GM23248 (cell line): ENCODE measurements at regions of chr7 and their contacts with region 1.

Region 1: DNA sequence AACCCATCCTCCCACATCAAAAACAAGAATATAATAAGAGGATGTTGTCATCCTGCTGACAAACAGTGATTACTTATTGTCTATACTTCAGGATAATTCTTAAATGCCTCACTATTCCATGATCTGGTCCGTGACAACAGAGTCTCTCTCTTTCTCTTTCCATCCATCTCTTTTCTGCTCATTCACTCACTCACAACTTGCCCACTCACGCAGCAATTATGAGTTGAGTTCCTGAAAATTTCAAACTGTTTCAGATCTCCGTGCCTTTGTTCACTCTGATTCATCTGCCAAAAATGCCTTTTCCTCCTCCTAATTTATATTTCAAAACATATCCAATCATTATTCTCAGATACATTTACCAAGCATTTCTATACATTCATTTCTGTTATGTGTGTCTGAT is 1.4 kb downstream of the OR6B1 start:
- DNase-seq: peak; percentile 70
- H3K4me3 ChIP-seq: peak overlapping the region; percentile 52
- H3K27ac ChIP-seq: peak overlapping the region; percentile 16
- H3K4me1 ChIP-seq: peaks cover 12% of the 10 kb centered on the region
- H3K27me3 ChIP-seq: no peaks in the 10 kb centered on the region

Region 2: GRCh38 chr7:143884969-143885559 is 116.5 kb before region 1 on chr7:
- in situ Hi-C with region 1: loop called (anchors 10 kb)
- DNase-seq: peak; percentile 76
- H3K4me3 ChIP-seq: peak overlapping the region; percentile 70
- H3K27ac ChIP-seq: no peak overlapping the region
- H3K4me1 ChIP-seq: 0 out of 2 replicates have a peak, but pooled peaks cover 7% of the 10 kb centered on the region
- H3K27me3 ChIP-seq: no peaks in the 10 kb centered on the region